ENCODE measurements at regions of chr19 and their contacts with region 1.

Region 1: GRCh38 chr19:1260636-1261537 is 8.2 kb upstream of the CIRBP start:
- DNase-seq: peak; percentile 91
- ATAC-seq: peak; percentile 73
- H3K4me3 ChIP-seq: peak overlapping the region; percentile 85 to 89
- H3K27ac ChIP-seq: peak overlapping the region; percentile 99
- H3K4me1 ChIP-seq: peaks cover 57 to 93% of the 10 kb centered on the region in 2 experiments
- H3K27me3 ChIP-seq: no peaks in the 10 kb centered on the region
- CTCF ChIP-seq: no peak
- POLR2A ChIP-seq: peak; percentile 6
- RAD21 ChIP-seq: no peak

Region 2: GRCh38 chr19:1230585-1231489 is 30.1 kb before region 1 on chr19:
- CTCF ChIA-PET with region 1: no interaction called
- POLR2A ChIA-PET with region 1: no interaction called
- RAD21 ChIA-PET with region 1: no interaction called
- intact Hi-C with region 1: no loop called
- DNase-seq: no peak
- ATAC-seq: no peak
- H3K4me3 ChIP-seq: no peak overlapping the region
- H3K27ac ChIP-seq: no peak overlapping the region
- H3K4me1 ChIP-seq: peaks cover 18 to 43% of the 10 kb centered on the region in 2 experiments
- H3K27me3 ChIP-seq: no peaks in the 10 kb centered on the region
- CTCF ChIP-seq: no peak
- POLR2A ChIP-seq: no peak
- RAD21 ChIP-seq: no peak

Region 3: DNA sequence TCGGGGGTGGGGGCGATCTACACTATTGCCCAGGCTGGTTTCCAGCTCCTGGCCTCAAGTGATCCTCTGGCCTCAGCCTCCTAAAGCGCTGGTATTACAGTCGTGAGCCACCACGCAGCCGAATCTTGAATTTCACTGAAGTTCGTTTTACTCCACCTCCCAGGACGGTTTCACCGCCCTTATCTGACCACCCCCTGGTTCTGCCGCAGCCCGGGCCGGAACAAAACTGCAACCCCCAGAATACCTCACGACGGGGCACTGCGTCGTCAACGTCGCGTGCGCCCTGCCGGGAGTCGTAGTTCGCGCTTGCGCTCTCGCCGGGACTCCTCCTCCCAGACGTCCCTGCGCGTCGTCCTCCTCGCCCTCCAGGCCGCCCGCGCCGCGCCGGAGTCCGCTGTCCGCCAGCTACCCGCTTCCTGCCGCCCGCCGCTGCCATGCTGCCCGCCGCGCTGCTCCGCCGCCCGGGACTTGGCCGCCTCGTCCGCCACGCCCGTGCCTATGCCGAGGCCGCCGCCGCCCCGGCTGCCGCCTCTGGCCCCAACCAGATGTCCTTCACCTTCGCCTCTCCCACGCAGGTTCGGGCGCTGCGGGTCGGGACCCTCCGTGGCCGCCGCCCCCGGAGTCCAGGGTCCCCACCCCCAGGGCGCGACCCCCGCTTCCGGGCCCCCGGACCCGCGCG is 19.3 kb before region 1 on chr19 and contains the start of gene ATP5F1D:
- CTCF ChIA-PET with region 1: interaction called, 325 read pairs
- POLR2A ChIA-PET with region 1: interaction called, 58 read pairs
- RAD21 ChIA-PET with region 1: interaction called, 45 to 51 read pairs
- intact Hi-C with region 1: loop called (anchors 1 kb)
- DNase-seq: no peak
- ATAC-seq: peak; percentile 60
- H3K4me3 ChIP-seq: peak within 1 kb of the TSS; percentile 87 to 89
- H3K27ac ChIP-seq: peak within 1 kb of the TSS; percentile 100
- H3K4me1 ChIP-seq: peaks cover 52 to 70% of the 10 kb centered on the region in 2 experiments
- H3K27me3 ChIP-seq: no peaks in the 10 kb centered on the region
- CTCF ChIP-seq: no peak
- POLR2A ChIP-seq: peak; percentile 61
- RAD21 ChIP-seq: no peak
- total RNA-seq, gene ATP5F1D: 428 TPM

Region 4: GRCh38 chr19:1304197-1304924 is 43.5 kb after region 1 on chr19:
- CTCF ChIA-PET with region 1: no interaction called
- POLR2A ChIA-PET with region 1: no interaction called
- RAD21 ChIA-PET with region 1: no interaction called
- intact Hi-C with region 1: no loop called
- DNase-seq: no peak
- ATAC-seq: peak; percentile 20; the same call in 1 of the 2 replicates
- H3K4me3 ChIP-seq: no peak overlapping the region
- H3K27ac ChIP-seq: no peak overlapping the region
- H3K4me1 ChIP-seq: peaks cover 2% of the 10 kb centered on the region in 2 experiments; a peak in 2 of 4 replicates
- H3K27me3 ChIP-seq: no peaks in the 10 kb centered on the region
- CTCF ChIP-seq: no peak
- POLR2A ChIP-seq: no peak
- RAD21 ChIP-seq: no peak

Region 5: DNA sequence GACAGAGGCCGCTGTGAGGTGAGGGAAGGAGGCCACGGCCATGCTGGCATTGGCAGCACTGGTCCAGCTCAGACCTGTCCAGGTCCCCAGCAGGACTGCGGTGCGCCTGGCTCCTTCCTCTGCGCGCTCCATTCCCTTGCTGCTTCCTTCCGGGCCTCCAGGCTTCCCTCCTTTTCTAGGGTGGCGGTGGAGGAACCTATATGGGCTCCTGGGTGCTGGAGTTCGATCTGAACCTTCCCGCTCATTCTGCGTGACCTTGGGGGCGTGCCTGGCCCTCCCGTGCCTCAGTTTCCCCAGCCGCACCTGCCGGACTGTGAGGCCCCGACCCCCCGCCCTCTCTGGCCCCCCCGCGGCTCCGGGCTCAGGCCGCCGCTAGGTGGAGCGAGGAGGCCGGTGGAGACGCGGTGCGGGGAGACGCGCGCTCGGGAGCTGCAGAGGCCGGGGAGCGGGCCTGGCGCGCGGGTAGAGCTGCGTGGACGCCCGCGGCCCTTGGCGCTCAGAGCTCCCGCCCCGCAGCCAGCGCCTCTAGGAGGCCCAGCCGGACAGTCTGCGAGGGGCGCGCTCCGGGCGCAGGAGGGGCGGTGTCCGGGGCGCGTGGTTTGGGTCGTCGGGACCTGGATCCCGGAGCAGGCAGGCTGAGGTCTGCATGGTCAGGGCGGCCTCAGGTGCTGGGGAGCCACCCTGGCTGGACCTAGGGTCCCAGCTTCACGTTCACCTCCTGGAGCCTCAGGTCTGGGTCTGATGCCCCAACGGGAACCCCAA is 54.8 kb after region 1 on chr19:
- CTCF ChIA-PET with region 1: no interaction called
- POLR2A ChIA-PET with region 1: no interaction called
- RAD21 ChIA-PET with region 1: no interaction called
- intact Hi-C with region 1: no loop called
- DNase-seq: peak; percentile 18
- ATAC-seq: peak; percentile 85
- H3K4me3 ChIP-seq: no peak overlapping the region
- H3K27ac ChIP-seq: no peak overlapping the region
- H3K4me1 ChIP-seq: peaks cover 12 to 39% of the 10 kb centered on the region in 2 experiments
- H3K27me3 ChIP-seq: 0 out of 2 replicates have a peak, but pooled peaks cover 4% of the 10 kb centered on the region
- CTCF ChIP-seq: peak; percentile 62 to 76 (median 69); a peak in 5 of 6 replicates
- POLR2A ChIP-seq: no peak
- RAD21 ChIP-seq: peak; percentile 80

Region 6: DNA sequence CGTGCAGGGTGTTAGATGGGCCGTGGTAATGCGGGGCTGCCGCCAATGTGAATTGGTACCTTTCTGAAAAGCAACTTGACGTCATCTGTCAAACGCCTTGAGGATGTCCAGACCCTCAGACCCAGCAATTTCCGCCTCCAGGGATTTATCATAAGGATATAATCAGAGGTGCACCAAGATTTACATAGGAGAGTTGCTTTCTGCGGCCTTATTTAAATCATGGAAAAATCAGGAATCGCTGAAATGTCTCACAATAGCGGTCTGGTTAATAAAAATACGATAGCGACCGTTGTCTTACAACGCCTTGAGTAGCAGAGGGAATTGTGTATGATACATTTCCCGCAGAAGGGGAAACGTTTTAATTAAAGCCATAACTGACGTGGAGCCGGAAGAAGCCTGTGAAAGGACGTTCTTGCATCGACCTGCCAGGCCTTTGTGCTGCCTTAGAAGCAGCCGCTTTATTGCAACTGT is 90.5 kb after region 1 on chr19:
- CTCF ChIA-PET with region 1: no interaction called
- POLR2A ChIA-PET with region 1: no interaction called
- RAD21 ChIA-PET with region 1: no interaction called
- intact Hi-C with region 1: no loop called
- DNase-seq: no peak
- ATAC-seq: no peak
- H3K4me3 ChIP-seq: no peak overlapping the region
- H3K27ac ChIP-seq: no peak overlapping the region
- H3K4me1 ChIP-seq: peaks cover 10 to 18% of the 10 kb centered on the region in 2 experiments
- H3K27me3 ChIP-seq: no peaks in the 10 kb centered on the region
- CTCF ChIP-seq: no peak
- POLR2A ChIP-seq: no peak
- RAD21 ChIP-seq: no peak